ENCODE measurements at regions of chr9 and their contacts with region 1.

Region 1: GRCh38 chr9:114587385-114588202 is at the start of gene ATP6V1G1:
- DNase-seq: peak; percentile 94 to 99 (median 96)
- ATAC-seq: peak; percentile 98
- H3K4me3 ChIP-seq: peak within 1 kb of the TSS; percentile 71
- H3K27ac ChIP-seq: peak within 1 kb of the TSS; percentile 89
- H3K4me1 ChIP-seq: peaks cover 3 to 11% of the 10 kb centered on the region in 2 experiments; a peak in 4 of 5 replicates
- H3K27me3 ChIP-seq: no peaks in the 10 kb centered on the region
- CTCF ChIP-seq: peak; percentile 8 to 28 (median 15); a peak in 3 of 6 replicates
- EP300 ChIP-seq: no peak; the same call in 1 of the 2 replicates
- POLR2A ChIP-seq: peak; percentile 94
- RAD21 ChIP-seq: no peak
- polyA plus RNA-seq, gene ATP6V1G1: 396 to 492 TPM

Region 2: GRCh38 chr9:114559830-114560513 is 27.6 kb before region 1 on chr9:
- CTCF ChIA-PET with region 1: no interaction called
- POLR2A ChIA-PET with region 1: interaction called, 6 read pairs
- in situ Hi-C with region 1: no loop called
- intact Hi-C with region 1: loop called (anchors 2 kb)
- DNase-seq: no peak
- ATAC-seq: no peak
- H3K4me3 ChIP-seq: no peak overlapping the region
- H3K27ac ChIP-seq: no peak overlapping the region
- H3K4me1 ChIP-seq: peaks cover 0 to 11% of the 10 kb centered on the region in 2 experiments; a peak in 3 of 5 replicates
- H3K27me3 ChIP-seq: no peaks in the 10 kb centered on the region; a peak in 1 of 5 replicates
- CTCF ChIP-seq: no peak
- EP300 ChIP-seq: no peak
- POLR2A ChIP-seq: no peak
- RAD21 ChIP-seq: no peak

Region 3: DNA sequence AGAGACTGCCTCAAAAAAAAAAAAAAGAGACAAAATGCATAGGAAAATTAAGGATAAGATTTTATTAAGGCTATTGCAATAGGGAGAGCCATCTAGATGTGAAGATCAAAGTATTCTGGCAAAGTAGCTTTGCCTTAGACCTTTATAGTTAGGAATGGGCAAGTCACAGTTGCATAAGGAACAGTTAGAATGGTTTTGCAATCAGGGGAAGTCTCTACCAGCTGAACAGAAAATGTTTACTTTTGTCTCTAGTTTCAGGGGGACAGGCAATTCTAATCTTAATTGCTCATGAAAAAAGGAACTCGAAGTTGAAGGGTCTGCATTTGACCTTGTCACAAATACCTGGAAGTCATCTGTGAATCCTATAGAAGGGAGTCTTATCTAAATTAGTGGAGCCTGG is 13.2 kb before region 1 on chr9:
- CTCF ChIA-PET with region 1: no interaction called
- POLR2A ChIA-PET with region 1: interaction called, 12 read pairs
- in situ Hi-C with region 1: no loop called
- intact Hi-C with region 1: no loop called
- DNase-seq: no peak
- ATAC-seq: no peak
- H3K4me3 ChIP-seq: no peak overlapping the region
- H3K27ac ChIP-seq: no peak overlapping the region
- H3K4me1 ChIP-seq: no peaks in the 10 kb centered on the region; a peak in 1 of 5 replicates
- H3K27me3 ChIP-seq: peaks cover 0 to 5% of the 10 kb centered on the region in 2 experiments; a peak in 3 of 5 replicates
- CTCF ChIP-seq: no peak
- EP300 ChIP-seq: no peak
- POLR2A ChIP-seq: no peak
- RAD21 ChIP-seq: no peak

Region 4: DNA sequence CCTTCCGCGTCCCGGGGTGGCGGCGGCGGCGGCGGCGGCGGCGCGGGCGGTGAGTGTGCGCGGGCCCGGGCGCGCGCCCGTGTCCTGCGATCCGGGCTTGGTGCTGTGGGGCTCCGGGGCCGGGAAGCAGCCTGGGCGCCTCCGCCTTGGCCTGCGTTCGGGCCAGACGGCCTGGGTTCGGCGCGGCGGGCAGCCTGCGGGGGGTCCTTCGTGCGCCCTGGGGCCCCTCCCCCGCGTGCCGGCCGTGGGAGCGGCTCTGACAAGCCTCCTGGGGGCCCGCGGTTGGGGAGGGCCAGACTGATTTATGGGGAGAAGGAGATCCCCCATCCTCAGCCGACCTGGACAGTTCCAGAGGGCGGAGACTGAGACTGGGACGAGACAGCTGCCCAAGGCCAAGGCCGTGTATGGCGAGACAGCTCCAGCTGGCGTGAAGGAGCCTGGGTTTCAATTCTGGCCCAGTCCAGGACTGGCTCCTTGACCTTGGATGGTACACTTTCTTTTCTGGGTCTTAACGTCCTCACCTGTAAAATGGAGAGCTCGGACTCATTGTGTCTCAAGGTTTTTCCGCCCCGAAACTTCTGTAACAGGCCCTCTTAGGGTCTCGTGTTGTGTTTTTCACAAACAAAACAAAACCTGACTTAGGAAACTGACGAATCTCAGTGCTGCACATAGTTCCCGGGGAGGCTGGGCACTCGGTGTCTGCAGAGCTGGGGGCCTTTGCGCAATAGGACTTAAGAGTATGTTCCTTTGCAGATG is 24.1 kb after region 1 on chr9:
- CTCF ChIA-PET with region 1: no interaction called
- POLR2A ChIA-PET with region 1: interaction called, 7 read pairs
- in situ Hi-C with region 1: no loop called
- intact Hi-C with region 1: loop called (anchors 1 kb)
- DNase-seq: peak; percentile 73 to 83 (median 80)
- ATAC-seq: peak; percentile 83
- H3K4me3 ChIP-seq: peak overlapping the region; percentile 72
- H3K27ac ChIP-seq: peak overlapping the region; percentile 91
- H3K4me1 ChIP-seq: peaks cover 16 to 18% of the 10 kb centered on the region in 2 experiments
- H3K27me3 ChIP-seq: no peaks in the 10 kb centered on the region
- CTCF ChIP-seq: no peak
- EP300 ChIP-seq: no peak
- POLR2A ChIP-seq: no peak
- RAD21 ChIP-seq: no peak

Region 5: DNA sequence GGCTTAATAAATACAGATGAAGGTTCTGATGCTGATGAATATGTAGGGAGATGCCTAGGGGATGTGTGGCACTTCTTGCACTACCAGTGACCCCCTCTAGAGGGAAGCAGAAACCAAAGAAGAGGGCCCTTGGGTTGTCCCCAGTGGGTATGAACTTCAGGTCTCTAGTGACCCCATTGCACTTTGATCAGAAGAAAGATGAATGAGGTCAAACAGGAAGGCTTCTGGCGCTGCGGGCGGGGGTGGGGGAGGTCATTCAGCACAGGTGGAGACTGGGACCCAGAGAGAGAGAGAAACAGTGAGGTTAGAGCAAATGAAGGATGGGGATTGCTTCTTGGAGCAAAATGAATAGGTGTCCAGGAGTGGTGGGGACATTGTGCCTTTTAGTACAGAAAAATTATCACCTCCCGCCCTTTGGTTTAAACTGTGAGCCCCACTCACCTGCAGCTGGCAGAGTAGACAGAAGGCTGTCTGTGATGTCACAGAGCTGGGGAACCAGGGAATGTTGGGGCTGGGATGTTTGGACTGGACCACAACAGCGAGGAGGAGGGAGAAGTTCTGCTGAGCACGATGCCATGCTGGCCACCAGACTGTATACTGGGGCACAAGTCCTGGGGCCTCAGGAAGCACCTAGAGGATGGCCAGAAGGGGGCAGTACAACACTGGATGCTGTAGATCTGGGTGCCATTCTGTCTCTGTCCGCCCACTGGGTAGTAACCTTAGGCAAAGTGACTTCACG is 94.2 kb after region 1 on chr9 and contains the start of gene TEX48:
- CTCF ChIA-PET with region 1: no interaction called
- POLR2A ChIA-PET with region 1: no interaction called
- in situ Hi-C with region 1: no loop called
- intact Hi-C with region 1: no loop called
- DNase-seq: peak; percentile 65 to 77 (median 75)
- ATAC-seq: peak; percentile 94
- H3K4me3 ChIP-seq: no peak within 1 kb of the TSS
- H3K27ac ChIP-seq: no peak within 1 kb of the TSS
- H3K4me1 ChIP-seq: peaks cover 0 to 3% of the 10 kb centered on the region in 2 experiments; a peak in 1 of 5 replicates
- H3K27me3 ChIP-seq: peaks cover 0 to under 1% of the 10 kb centered on the region in 2 experiments; a peak in 2 of 5 replicates
- CTCF ChIP-seq: peak; percentile 67 to 79 (median 78)
- EP300 ChIP-seq: no peak
- POLR2A ChIP-seq: no peak
- RAD21 ChIP-seq: peak; percentile 39 to 71
- polyA plus RNA-seq, gene TEX48: not detected